ENCODE measurements at regions of chr17 and their contacts with region 1.

Region 1: GRCh38 chr17:29568331-29569244 is at the start of gene TP53I13:
- DNase-seq: no peak
- H3K4me3 ChIP-seq: peak within 1 kb of the TSS; percentile 77
- CTCF ChIP-seq: no peak

Region 2: GRCh38 chr17:29376667-29377270 is 191.8 kb before region 1 on chr17:
- CTCF ChIA-PET with region 1: interaction called, 222 read pairs
- POLR2A ChIA-PET with region 1: no interaction called
- DNase-seq: peak; percentile 42
- H3K4me3 ChIP-seq: no peak overlapping the region; the same call in 1 of the 2 replicates
- CTCF ChIP-seq: no peak

Region 3: GRCh38 chr17:29451121-29451742 is 117.4 kb before region 1 on chr17:
- CTCF ChIA-PET with region 1: no interaction called
- POLR2A ChIA-PET with region 1: no interaction called
- DNase-seq: no peak
- H3K4me3 ChIP-seq: no peak overlapping the region
- CTCF ChIP-seq: no peak

Region 4: GRCh38 chr17:29579866-29580771 is 11.5 kb after region 1 on chr17:
- CTCF ChIA-PET with region 1: interaction called, 161 read pairs
- POLR2A ChIA-PET with region 1: interaction called, 4 read pairs
- DNase-seq: no peak
- H3K4me3 ChIP-seq: no peak overlapping the region
- CTCF ChIP-seq: peak; percentile 95

Region 5: GRCh38 chr17:29589524-29590410 is 21.2 kb after region 1 on chr17 and contains the start of gene GIT1:
- CTCF ChIA-PET with region 1: interaction called, 161 read pairs
- POLR2A ChIA-PET with region 1: interaction called, 3 read pairs
- DNase-seq: no peak
- H3K4me3 ChIP-seq: peak within 1 kb of the TSS; percentile 82
- CTCF ChIP-seq: no peak

Region 6: DNA sequence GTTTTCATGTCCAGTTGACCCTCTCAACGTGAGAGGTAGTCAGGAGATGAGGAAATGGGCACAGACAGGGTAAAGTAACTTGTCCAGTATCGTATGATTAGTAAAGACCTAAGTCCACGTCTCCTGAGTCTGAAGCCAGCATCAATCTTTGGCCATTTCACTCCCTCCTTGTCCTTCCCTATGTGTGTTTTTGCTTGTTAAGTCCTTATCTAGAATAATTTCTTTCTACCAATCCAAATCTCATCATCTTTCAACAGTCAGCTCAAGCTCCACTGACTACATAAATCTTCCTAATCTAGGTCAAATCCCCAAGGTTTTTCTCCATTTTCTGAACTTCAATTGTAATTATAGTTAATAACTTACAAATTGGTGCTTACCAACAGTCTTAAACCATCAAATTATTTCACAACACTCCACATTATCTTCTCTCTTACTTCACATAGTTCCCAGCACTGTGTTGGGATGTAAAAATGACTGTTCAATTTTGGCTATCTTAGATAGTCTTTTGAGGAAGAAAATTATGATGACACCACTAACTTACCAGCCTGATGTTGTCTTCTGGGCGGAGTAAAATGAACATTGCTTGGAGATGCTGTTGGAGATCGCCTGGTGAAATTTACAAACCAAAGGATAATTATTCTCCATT is 126.5 kb after region 1 on chr17:
- CTCF ChIA-PET with region 1: no interaction called
- POLR2A ChIA-PET with region 1: no interaction called
- DNase-seq: no peak
- H3K4me3 ChIP-seq: no peak overlapping the region
- CTCF ChIP-seq: no peak

Measured in AG04449 (cell line).